ENCODE measurements at regions of chr1 and their contacts with region 1.

Region 1: DNA sequence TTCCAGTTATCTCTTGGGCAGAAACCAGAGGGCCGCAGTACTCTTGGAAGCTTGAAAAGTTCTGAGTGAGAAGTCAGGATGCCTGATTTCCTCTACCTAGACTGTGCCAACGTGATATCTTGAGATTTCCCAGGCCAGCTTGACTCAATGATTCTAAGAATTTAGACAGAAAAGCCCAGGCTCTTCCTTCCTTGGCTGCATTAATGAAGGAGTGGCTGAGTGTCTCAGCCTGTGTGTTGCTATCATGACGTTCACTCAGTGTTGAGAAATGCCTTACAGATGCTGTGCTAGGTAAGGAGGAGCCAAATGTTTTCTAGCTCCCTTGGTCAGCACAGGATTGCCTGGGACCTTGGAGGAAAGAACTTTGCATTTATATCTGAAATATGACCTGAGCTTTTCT is 454.1 kb upstream of the USP24 start:
- DNase-seq: no peak
- H3K4me3 Mint-ChIP-seq: no peak overlapping the region
- H3K27ac Mint-ChIP-seq: no peak overlapping the region
- H3K4me1 Mint-ChIP-seq: no peaks in the 10 kb centered on the region
- H3K27me3 Mint-ChIP-seq: no peaks in the 10 kb centered on the region
- CTCF ChIP-seq: no peak

Region 2: DNA sequence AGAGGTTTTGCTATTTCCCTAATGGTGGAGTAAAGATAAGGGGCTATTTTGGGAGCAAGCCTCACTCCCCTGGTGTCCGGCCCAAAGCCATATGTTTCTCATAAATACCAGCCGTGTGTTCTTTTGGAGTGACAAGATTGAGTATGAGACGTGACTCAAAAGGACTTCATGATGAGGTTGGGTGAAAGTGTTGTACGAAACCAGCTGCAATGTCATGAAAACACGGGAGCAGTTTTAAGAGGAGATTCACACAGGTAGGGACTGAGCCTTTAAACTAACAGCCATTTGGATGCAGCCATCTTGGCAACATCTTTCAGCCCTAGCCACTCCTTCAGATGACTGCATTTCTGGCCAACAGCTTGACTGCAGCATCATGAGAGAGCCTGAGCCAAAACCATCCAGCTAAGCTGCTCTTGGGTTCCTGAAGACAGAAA is 78.1 kb after region 1 on chr1:
- CTCF ChIA-PET with region 1: interaction called, 10 read pairs
- intact Hi-C with region 1: no loop called
- DNase-seq: no peak
- H3K4me3 Mint-ChIP-seq: no peak overlapping the region
- H3K27ac Mint-ChIP-seq: no peak overlapping the region
- H3K4me1 Mint-ChIP-seq: no peaks in the 10 kb centered on the region
- H3K27me3 Mint-ChIP-seq: no peaks in the 10 kb centered on the region
- CTCF ChIP-seq: no peak

Region 3: DNA sequence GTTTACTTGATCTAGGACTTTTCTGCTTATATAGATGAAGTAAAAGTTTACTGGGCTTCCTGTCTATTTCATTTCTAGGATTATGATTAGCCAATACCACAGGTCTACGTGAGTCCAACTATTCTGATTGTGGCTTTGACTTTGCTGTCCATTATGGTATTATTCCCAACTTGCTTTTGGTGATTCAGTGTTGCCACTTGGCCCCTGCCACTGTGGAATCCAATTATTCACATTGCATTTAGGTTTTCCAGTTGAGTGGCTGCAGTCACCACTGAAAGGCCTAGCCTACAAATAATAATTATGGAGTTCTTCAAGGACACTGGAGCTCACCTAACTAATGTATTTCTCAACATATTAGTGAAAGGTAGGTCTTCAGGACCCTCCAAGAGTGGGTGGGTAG is 120.2 kb after region 1 on chr1:
- CTCF ChIA-PET with region 1: no interaction called
- intact Hi-C with region 1: no loop called
- DNase-seq: no peak
- H3K4me3 Mint-ChIP-seq: no peak overlapping the region
- H3K27ac Mint-ChIP-seq: no peak overlapping the region
- H3K4me1 Mint-ChIP-seq: no peaks in the 10 kb centered on the region
- H3K27me3 Mint-ChIP-seq: no peaks in the 10 kb centered on the region
- CTCF ChIP-seq: no peak

Region 4: GRCh38 chr1:56803561-56804156 is 1134.4 kb after region 1 on chr1:
- CTCF ChIA-PET with region 1: no interaction called
- intact Hi-C with region 1: no loop called
- DNase-seq: peak; percentile 74
- H3K4me3 Mint-ChIP-seq: no peak overlapping the region
- H3K27ac Mint-ChIP-seq: no peak overlapping the region
- H3K4me1 Mint-ChIP-seq: no peaks in the 10 kb centered on the region
- H3K27me3 Mint-ChIP-seq: peaks cover under 1% of the 10 kb centered on the region
- CTCF ChIP-seq: peak; percentile 62